AG04449 (cell line): ENCODE measurements at regions of chr16 and their contacts with region 1.

Region 1: GRCh38 chr16:2023098-2023925 is 3.4 kb upstream of the NHERF2 start:
- DNase-seq: no peak
- H3K4me3 ChIP-seq: peak overlapping the region; percentile 46
- CTCF ChIP-seq: peak; percentile 98

Region 2: DNA sequence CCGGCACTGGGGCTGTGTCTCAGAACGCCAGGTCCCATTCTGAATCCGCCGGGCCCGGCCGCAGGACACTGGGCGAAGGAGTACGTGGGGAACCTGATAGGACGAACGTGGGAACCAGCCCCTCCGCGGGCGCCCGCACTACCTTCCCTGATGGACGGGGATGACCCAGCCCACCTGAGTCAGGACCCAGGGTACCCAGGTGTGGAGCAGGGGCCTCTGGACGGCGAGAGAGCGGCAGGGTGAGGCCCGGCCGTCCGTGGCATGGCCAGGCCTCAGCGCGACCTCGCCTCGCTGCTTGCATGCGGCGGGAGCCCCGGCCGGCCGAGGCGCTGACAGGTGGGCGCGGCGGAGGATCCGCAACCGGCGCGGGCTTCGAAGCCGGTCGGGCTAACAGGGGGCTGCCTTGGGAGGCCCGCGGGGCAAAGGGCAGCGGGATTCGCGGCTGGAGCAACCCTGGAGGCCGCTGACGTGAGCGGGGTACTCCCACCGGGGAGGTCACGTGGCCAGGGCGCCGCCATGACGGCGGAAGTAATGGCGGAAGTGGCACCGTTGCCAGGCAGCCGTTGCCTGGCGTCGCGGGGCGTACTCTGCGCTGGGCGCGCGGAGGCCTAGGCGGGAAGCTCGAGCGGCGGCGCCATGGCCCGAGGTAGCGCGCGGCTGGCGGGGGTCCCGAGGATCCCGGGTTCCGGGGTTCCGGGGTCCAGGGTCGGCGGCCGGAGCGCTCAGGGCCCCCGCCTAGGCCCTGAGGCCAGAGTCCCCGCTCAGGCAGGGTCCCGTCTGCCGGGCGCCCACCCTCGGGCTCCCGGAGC is 1374.3 kb before region 1 on chr16 and contains the start of gene WDR90:
- CTCF ChIA-PET with region 1: no interaction called
- POLR2A ChIA-PET with region 1: no interaction called
- DNase-seq: peak; percentile 28
- H3K4me3 ChIP-seq: peak within 1 kb of the TSS; percentile 74
- CTCF ChIP-seq: no peak

Region 3: DNA sequence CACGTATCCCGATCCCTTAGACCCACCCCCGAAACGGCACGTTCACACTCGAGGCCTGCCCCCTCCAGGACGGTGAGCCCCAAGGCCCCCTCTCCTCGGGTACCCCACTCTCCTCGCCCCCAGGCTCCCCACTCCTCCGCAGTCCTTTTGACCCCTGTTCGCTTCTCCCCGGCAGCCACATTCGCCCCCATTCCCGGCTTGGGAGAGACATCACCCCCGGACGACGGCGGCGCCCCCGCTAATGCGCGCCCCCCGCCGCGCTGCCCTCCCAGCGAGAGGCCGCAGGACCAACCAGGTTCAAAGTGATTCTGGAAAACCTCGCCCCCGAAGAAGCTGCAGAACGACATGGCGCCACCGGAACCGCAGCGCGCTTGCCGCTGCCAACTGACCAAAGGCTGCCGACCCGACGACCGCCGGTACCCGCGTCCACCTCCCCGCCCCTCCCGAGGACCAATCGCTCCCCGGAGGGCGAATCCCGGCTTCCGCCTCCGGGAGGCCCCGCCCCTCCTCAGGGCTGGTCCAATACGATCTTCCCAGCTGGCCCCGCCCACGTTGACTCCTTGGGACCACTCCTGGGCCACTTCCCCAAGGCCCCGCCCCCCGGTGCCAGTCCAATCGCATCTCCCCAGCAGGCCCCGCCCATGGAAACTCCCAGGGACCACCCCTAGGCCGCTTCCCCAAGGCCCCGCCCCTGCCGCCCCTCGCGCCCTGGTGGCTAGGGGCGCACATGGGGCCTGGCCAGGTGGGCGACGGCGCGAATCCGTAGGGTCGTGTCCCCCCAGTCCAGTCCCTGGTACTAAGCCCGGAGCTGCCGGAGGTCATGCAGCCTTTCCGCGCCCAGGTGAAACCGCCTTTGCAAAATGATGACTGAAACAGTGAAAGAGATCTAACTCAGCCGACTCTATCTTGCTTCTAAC is 80.2 kb before region 1 on chr16 and contains the start of gene MSRB1:
- CTCF ChIA-PET with region 1: no interaction called
- POLR2A ChIA-PET with region 1: no interaction called
- DNase-seq: peak; percentile 65
- H3K4me3 ChIP-seq: peak within 1 kb of the TSS; percentile 87
- CTCF ChIP-seq: no peak

Region 4: GRCh38 chr16:2039274-2040031 is 16.1 kb after region 1 on chr16:
- CTCF ChIA-PET with region 1: interaction called, 19 read pairs
- POLR2A ChIA-PET with region 1: interaction called, 3 read pairs
- DNase-seq: peak; percentile 73
- H3K4me3 ChIP-seq: no peak overlapping the region
- CTCF ChIP-seq: no peak

Region 5: DNA sequence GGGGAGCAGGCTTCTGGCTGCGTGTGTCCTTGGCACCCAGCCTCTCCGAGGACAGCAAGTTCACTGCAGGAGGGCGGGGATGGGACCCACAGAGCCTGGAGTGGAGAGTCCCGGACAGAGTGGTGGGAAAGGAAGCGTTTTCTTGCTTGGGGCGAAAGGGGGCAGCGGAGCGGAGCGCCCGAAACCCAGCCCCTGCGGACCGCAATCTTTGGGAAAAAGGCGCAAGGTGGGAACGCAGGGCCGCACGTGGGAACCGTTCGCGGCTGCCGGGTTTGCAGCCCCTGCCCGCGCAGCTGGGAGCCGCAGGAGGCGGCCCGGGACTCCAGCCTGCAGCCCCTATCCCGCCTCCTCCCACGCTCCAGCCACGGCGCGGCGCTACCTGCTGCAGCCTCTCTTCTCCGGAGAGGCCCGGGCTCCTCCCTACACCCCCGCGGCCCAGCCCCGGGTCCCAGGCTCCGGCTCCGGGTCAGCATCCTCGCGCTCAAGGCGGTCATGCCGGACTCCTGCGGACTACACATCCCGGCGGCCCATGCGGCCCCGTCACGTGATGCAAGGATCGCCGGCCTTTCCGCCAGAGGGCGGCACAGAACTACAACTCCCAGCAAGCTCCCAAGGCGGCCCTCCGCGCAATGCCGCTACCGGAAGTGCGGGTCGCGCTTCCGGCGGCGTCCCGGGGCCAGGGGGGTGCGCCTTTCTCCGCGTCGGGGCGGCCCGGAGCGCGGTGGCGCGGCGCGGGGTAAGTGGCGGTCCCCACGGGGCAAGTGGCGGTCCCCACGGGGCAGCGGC is 24.2 kb after region 1 on chr16 and contains the starts of genes NTHL1 and TSC2:
- CTCF ChIA-PET with region 1: interaction called, 19 read pairs
- POLR2A ChIA-PET with region 1: interaction called, 5 read pairs
- DNase-seq: peak; percentile 70
- H3K4me3 ChIP-seq: peak within 1 kb of the TSS; percentile 86
- CTCF ChIP-seq: peak; percentile 48

Region 6: GRCh38 chr16:2056681-2057407 is 33.5 kb after region 1 on chr16:
- CTCF ChIA-PET with region 1: interaction called, 50 read pairs
- POLR2A ChIA-PET with region 1: no interaction called
- DNase-seq: no peak
- H3K4me3 ChIP-seq: no peak overlapping the region
- CTCF ChIP-seq: no peak

Region 7: DNA sequence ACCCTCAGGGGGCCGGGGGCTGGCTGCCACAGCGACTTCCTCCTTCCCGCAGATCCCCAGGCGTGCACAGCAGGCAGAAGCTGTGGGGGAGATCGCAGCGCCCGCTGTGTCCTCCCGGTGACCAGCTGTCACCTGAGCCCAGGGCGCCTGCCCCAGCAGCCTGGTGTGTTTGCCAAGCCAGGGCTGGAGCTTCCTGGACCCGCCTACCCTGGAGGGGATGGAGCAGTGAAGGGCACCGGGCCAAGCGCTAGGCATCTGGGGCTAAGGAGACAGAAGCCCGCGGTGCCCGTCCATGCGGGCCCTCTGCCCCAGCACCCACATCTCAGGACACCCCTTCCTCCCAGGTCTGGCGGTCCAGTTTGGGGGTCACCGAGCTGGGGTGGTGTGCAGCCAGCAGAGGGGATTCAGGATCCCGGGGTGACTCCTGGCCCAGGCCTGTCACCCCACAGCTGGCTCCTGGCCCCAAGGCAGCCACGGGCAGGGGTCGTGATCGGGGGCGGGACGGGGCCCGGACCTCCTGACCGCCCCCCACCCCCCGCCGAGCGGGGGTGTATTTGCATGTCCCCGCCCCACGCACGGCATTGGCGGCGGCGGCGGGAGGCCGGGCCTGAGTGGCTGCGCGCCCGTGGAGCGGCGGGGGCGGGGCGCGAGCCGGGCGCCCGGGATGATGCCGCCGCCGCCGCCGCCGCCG is 124.8 kb after region 1 on chr16 and contains the start of gene RAB26:
- CTCF ChIA-PET with region 1: interaction called, 135 read pairs
- POLR2A ChIA-PET with region 1: no interaction called
- DNase-seq: no peak
- H3K4me3 ChIP-seq: peak within 1 kb of the TSS; percentile 48
- CTCF ChIP-seq: no peak